Natural killer cell (primary cell): ENCODE measurements at regions of chr4 and their contacts with region 1.

Region 1: DNA sequence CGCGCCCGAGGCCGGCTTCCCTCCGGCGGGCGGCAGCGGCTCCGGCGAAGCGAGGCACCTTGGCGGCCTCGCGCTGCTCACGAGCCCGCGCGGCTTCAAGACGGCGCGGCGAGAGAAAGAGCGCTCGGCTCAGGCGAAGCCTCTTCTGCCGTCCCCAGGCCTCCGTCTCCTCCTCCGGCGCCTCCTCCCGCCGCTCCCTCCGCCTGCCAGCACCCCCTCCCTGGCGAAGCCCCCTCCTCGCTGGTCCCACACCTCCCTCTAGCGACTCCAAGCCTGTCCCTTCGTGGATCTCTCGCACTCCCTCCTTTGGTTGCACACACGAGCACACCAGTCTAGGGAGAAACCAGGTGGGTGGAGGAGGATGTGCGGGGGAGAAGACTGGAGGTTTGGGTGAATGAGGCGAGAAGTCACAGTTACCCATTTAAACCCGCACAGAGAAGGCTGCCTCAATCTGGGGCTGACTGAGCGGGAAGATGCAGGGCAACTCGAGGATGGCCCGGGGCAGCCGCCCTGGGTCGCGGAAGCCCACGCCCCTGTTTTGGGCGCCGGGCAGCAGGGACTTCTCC is at the start of gene CAMK2D:
- DNase-seq: peak in 1 of 2 donors; percentile 93
- ATAC-seq: peak; percentile 39 to 68 (median 55)
- H3K4me3 ChIP-seq: peak within 1 kb of the TSS; percentile 76
- H3K4me3 Mint-ChIP-seq: peak within 1 kb of the TSS; percentile 97
- H3K27ac ChIP-seq: peak within 1 kb of the TSS; percentile 98
- H3K27ac Mint-ChIP-seq: peak within 1 kb of the TSS; percentile 94 to 99
- H3K4me1 ChIP-seq: peaks cover 10% of the 10 kb centered on the region
- H3K4me1 Mint-ChIP-seq: peaks cover 41 to 44% of the 10 kb centered on the region in 2 donors
- H3K27me3 ChIP-seq: no peaks in the 10 kb centered on the region
- H3K27me3 Mint-ChIP-seq: peaks cover 0 to 2% of the 10 kb centered on the region in 2 donors
- CTCF ChIP-seq: no peak
- total RNA-seq, gene CAMK2D: 31.6 to 40.1 (median 34.5) TPM

Region 2: GRCh38 chr4:113564493-113564892 is 197.2 kb before region 1 on chr4:
- intact Hi-C with region 1: loop called (anchors 1 kb)
- DNase-seq: no peak
- ATAC-seq: peak in 1 of 3 donors; percentile 16
- H3K4me3 ChIP-seq: no peak overlapping the region
- H3K4me3 Mint-ChIP-seq: peak overlapping the region; percentile 85
- H3K27ac ChIP-seq: peak overlapping the region; percentile 24
- H3K27ac Mint-ChIP-seq: peak overlapping the region; percentile 74 to 82
- H3K4me1 ChIP-seq: peaks cover 10% of the 10 kb centered on the region
- H3K4me1 Mint-ChIP-seq: peaks cover 34 to 37% of the 10 kb centered on the region in 2 donors
- H3K27me3 ChIP-seq: no peaks in the 10 kb centered on the region
- H3K27me3 Mint-ChIP-seq: peaks cover 10 to 15% of the 10 kb centered on the region in 2 donors
- CTCF ChIP-seq: no peak

Region 3: GRCh38 chr4:113675731-113676697 is 85.7 kb before region 1 on chr4:
- intact Hi-C with region 1: loop called (anchors 2 kb)
- DNase-seq: no peak
- ATAC-seq: no peak
- H3K4me3 ChIP-seq: no peak overlapping the region
- H3K4me3 Mint-ChIP-seq: no peak overlapping the region
- H3K27ac ChIP-seq: no peak overlapping the region
- H3K27ac Mint-ChIP-seq: peak overlapping the region; percentile 85 to 95
- H3K4me1 ChIP-seq: peaks cover 6% of the 10 kb centered on the region
- H3K4me1 Mint-ChIP-seq: peaks cover 34 to 37% of the 10 kb centered on the region in 2 donors
- H3K27me3 ChIP-seq: no peaks in the 10 kb centered on the region
- H3K27me3 Mint-ChIP-seq: no peaks in the 10 kb centered on the region
- CTCF ChIP-seq: no peak

Region 4: GRCh38 chr4:113744667-113745240 is 16.9 kb before region 1 on chr4:
- intact Hi-C with region 1: loop called (anchors 2 kb)
- DNase-seq: no peak
- ATAC-seq: no peak
- H3K4me3 ChIP-seq: no peak overlapping the region
- H3K4me3 Mint-ChIP-seq: no peak overlapping the region
- H3K27ac ChIP-seq: no peak overlapping the region
- H3K27ac Mint-ChIP-seq: no peak overlapping the region
- H3K4me1 ChIP-seq: no peaks in the 10 kb centered on the region
- H3K4me1 Mint-ChIP-seq: peaks cover 16 to 24% of the 10 kb centered on the region in 2 donors
- H3K27me3 ChIP-seq: no peaks in the 10 kb centered on the region
- H3K27me3 Mint-ChIP-seq: no peaks in the 10 kb centered on the region
- CTCF ChIP-seq: no peak

Region 5: DNA sequence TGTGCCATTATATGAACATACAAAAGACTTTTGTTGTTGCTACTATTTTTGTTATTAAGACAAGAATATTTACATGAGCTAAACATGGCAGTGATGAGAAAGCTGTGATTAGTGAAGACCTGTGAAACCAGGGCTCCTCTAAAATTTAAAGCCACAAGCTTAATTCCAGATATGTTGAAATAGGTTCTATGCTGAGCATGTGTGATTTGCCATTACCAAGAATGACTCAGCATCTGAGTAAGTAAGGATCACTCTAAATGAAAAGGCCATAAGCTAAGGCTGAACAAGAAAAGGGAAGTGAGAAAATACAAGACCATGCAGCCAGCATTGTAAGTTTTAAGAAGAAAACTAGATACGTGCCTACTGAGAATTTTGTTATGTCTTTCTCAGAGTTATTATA is 75.7 kb after region 1 on chr4:
- intact Hi-C with region 1: no loop called
- DNase-seq: no peak
- ATAC-seq: no peak
- H3K4me3 ChIP-seq: no peak overlapping the region
- H3K4me3 Mint-ChIP-seq: no peak overlapping the region
- H3K27ac ChIP-seq: no peak overlapping the region
- H3K27ac Mint-ChIP-seq: no peak overlapping the region
- H3K4me1 ChIP-seq: no peaks in the 10 kb centered on the region
- H3K4me1 Mint-ChIP-seq: no peaks in the 10 kb centered on the region
- H3K27me3 ChIP-seq: no peaks in the 10 kb centered on the region
- H3K27me3 Mint-ChIP-seq: peaks cover 11 to 21% of the 10 kb centered on the region in 2 donors
- CTCF ChIP-seq: no peak